A549 (cell line): ENCODE measurements at regions of chr16 and their contacts with region 1.

Region 1: GRCh38 chr16:73028721-73029361 is 19.1 kb downstream of the ZFHX3 start:
- DNase-seq: no peak
- ATAC-seq: no peak
- H3K4me3 ChIP-seq: no peak overlapping the region
- H3K27ac ChIP-seq: no peak overlapping the region; a peak in 1 of 6 replicates
- H3K4me1 ChIP-seq: peaks cover 54% of the 10 kb centered on the region
- CTCF ChIP-seq: no peak
- EP300 ChIP-seq: no peak
- POLR2A ChIP-seq: no peak
- RAD21 ChIP-seq: no peak

Region 2: DNA sequence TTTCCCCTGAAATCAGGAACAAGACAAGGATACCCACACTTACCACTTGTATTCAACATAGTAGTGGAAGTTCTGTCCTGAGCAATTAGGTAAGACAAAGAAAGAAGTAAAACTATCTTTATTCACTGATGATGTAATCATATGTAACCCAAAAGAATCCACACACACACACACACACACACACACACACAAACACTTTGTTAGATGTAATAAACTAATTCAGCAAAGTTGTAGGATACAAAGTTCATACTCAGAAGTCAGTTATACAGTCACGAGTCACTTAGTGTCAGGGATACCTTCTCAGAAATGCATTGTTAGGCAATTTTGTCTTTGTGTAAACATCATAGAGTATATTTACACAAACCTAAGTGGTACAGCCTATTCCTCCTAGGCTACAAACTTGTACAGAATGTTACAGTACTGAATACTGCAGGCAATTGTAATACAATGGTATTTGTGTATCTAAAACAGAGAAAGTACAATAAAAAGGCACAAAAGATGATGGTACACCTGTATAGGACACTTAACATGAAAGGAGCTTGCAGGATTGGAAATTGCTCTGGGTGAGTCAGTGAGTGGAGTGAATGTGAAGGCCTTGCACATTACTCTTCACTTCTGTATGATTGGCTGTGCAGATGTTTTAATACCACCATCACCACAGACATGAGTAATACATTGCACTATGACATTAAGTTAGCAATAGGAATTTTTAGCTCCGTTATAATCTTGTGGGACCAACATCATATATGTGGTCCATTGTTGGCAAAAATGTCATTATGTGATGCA is 351.0 kb before region 1 on chr16:
- CTCF ChIA-PET with region 1: no interaction called
- POLR2A ChIA-PET with region 1: no interaction called
- DNase-seq: no peak
- ATAC-seq: no peak; a peak in 1 of 6 replicates
- H3K4me3 ChIP-seq: no peak overlapping the region
- H3K27ac ChIP-seq: peak overlapping the region in 1 of 2 experiments; percentile 49; a peak in 1 of 6 replicates
- H3K4me1 ChIP-seq: no peaks in the 10 kb centered on the region; the same call in 2 of the 3 replicates
- CTCF ChIP-seq: no peak
- EP300 ChIP-seq: no peak
- POLR2A ChIP-seq: no peak
- RAD21 ChIP-seq: no peak

Region 3: DNA sequence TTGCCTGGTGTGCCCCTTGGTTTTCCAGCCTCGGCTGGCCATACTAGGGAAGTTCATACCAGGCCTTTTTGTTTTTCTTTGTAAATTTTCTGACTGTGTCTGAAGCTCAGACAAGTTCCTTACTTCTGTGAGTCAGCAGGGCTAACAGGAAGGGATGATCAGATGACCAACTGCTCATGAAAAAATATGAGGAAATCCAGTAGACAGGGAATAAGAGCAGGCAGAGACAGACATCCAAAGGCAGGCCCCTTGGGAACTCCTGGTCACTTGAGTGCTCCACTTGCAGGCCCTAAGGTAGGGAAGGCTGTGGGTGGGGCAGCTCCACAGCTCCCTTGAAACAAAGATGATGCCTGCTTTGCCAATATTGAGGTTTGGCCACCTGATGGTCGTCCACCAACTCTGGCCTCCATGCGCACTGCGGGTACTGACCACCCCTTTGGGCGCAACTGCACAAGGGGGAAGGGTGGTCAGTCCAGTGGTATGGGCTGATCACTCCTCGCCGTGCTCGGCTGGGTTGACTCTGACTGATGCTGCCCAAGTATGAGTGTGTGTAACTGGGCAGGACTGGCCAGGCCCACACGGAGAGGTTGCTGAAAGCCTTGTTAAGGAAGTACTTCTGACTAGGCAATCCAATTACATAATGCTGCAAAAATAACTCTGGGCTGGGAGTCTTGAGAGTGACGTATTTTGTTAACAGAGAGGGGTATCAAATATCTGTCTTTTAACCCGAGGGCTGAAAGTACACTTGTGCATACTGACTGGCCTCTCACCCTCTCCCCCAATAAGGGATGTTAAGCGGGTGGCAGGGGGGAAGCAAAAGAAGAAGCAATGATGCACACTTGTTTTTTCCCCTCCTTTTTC is 39.9 kb after region 1 on chr16:
- CTCF ChIA-PET with region 1: no interaction called
- POLR2A ChIA-PET with region 1: no interaction called
- DNase-seq: peak in 1 of 2 experiments; percentile 89
- ATAC-seq: peak; percentile 70 to 71
- H3K4me3 ChIP-seq: no peak overlapping the region
- H3K27ac ChIP-seq: peak overlapping the region; percentile 91 to 94
- H3K4me1 ChIP-seq: peaks cover 59% of the 10 kb centered on the region
- CTCF ChIP-seq: no peak
- EP300 ChIP-seq: no peak; a peak in 1 of 5 replicates
- POLR2A ChIP-seq: no peak
- RAD21 ChIP-seq: no peak

Region 4: GRCh38 chr16:73122604-73123391 is 94.0 kb after region 1 on chr16:
- CTCF ChIA-PET with region 1: no interaction called
- POLR2A ChIA-PET with region 1: no interaction called
- DNase-seq: no peak
- ATAC-seq: no peak
- H3K4me3 ChIP-seq: no peak overlapping the region
- H3K27ac ChIP-seq: peak overlapping the region in 1 of 2 experiments; percentile 7; a peak in 1 of 6 replicates
- H3K4me1 ChIP-seq: peaks cover 11% of the 10 kb centered on the region; the same call in 2 of the 3 replicates
- CTCF ChIP-seq: no peak
- EP300 ChIP-seq: no peak
- POLR2A ChIP-seq: no peak
- RAD21 ChIP-seq: no peak

Region 5: GRCh38 chr16:73775841-73776388 is 747.1 kb after region 1 on chr16:
- CTCF ChIA-PET with region 1: no interaction called
- POLR2A ChIA-PET with region 1: interaction called, 13 read pairs
- DNase-seq: no peak
- ATAC-seq: no peak
- H3K4me3 ChIP-seq: no peak overlapping the region
- H3K27ac ChIP-seq: no peak overlapping the region
- H3K4me1 ChIP-seq: no peaks in the 10 kb centered on the region
- CTCF ChIP-seq: no peak
- EP300 ChIP-seq: no peak
- POLR2A ChIP-seq: no peak
- RAD21 ChIP-seq: no peak